Common myeloid progenitor, CD34-positive (primary cell): ENCODE measurements at regions of chr13 and their contacts with region 1.

Region 1: GRCh38 chr13:51832471-51833152 is 12.4 kb downstream of the TMEM272 start:
- DNase-seq: peak; percentile 57 to 78 (median 77)
- H3K4me3 ChIP-seq: no peak overlapping the region
- H3K27ac ChIP-seq: no peak overlapping the region
- H3K4me1 ChIP-seq: peaks cover 16 to 57% (median 35%) of the 10 kb centered on the region in 4 experiments
- H3K27me3 ChIP-seq: no peaks in the 10 kb centered on the region

Region 2: DNA sequence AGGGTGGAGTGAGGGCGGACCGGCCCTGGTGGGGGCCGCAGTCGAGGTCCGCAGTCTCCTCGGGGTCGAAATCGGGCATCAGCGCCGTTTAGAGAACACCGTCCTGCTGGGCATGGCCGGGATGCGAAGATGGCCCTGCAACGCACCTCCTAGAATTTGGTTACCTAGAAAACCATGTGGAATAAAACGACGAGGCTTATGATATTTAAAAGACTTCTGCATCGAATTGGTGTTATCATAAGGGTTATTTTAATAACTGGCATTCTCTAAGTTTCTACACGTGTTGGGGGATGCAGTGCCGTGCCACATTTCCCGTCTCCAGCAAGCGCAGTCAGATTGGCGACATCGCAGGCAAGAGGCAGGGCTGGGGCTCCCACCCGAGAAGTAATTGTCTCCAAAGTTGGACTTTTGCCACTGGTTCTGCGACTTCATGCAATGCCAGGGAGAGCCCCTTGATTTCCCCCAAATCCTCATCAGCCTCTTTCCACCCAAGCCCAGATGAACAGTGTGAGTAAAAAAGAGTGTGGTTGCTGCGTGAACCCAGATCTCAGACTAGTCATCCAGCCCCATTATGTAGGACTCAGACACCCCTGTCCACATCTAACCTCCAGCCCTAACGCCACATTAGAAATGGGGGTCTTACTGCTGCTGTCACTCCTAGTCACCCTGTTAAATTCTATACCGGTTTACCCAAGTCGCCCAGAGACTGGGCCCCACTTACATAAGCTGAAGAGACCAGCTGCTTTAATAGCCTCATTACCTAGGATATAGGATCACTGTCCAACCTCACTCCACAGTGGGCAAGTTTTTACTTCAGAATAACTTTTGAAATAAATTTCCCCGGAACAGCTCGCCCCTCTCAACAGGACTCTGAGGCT is 28.1 kb before region 1 on chr13:
- CTCF ChIA-PET with region 1: interaction called, 12 read pairs
- POLR2A ChIA-PET with region 1: no interaction called
- DNase-seq: peak in 1 of 3 donors; percentile 57
- H3K4me3 ChIP-seq: peak overlapping the region; percentile 46 to 82 (median 75)
- H3K27ac ChIP-seq: peak overlapping the region; percentile 82 to 94
- H3K4me1 ChIP-seq: peaks cover 13 to 54% (median 40%) of the 10 kb centered on the region in 4 experiments
- H3K27me3 ChIP-seq: no peaks in the 10 kb centered on the region

Region 3: DNA sequence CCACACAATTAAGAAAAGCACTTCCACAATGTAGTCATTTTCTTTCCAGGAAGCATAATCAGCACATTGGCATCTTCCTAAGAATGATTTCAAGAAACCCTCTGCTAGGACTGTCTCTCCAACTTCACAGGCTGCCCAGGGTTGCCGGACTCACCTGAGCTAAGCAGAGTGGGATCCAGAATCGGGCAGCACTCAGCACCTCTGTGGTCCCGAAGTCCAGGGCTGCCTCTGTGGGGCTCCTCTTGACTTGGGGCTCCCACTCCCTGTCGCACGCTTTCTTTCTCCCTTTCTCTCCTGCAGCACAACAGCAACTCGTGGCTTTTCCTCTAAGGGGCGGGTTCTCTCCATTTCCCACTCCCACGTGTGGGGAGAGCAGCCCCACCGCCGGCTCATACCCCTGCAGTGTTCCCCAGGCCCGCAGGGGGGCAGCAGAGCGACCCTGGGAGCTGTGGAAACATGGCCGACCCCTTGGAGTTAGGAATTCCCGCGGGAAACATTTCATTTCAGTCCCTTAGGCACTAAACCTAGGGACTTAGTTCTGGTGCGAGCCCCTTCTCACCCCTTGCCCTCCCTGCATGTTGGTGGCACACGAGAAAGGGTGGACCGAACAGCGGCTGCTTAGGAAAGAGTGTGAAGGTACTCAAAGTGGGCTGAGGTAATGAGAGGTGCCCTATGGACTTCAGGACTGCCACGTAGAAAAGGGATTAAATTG is 12.4 kb after region 1 on chr13 and contains the start of gene TMEM272:
- CTCF ChIA-PET with region 1: interaction called, 24 read pairs
- POLR2A ChIA-PET with region 1: interaction called, 3 read pairs
- DNase-seq: peak; percentile 37 to 50 (median 45)
- H3K4me3 ChIP-seq: peak within 1 kb of the TSS in 5 of 7 experiments; percentile 3 to 73 (median 58)
- H3K27ac ChIP-seq: no peak within 1 kb of the TSS
- H3K4me1 ChIP-seq: peaks cover 0 to 18% (median 5%) of the 10 kb centered on the region in 4 experiments
- H3K27me3 ChIP-seq: no peaks in the 10 kb centered on the region